ENCODE measurements at regions of chrX and their contacts with region 1.

Region 1: DNA sequence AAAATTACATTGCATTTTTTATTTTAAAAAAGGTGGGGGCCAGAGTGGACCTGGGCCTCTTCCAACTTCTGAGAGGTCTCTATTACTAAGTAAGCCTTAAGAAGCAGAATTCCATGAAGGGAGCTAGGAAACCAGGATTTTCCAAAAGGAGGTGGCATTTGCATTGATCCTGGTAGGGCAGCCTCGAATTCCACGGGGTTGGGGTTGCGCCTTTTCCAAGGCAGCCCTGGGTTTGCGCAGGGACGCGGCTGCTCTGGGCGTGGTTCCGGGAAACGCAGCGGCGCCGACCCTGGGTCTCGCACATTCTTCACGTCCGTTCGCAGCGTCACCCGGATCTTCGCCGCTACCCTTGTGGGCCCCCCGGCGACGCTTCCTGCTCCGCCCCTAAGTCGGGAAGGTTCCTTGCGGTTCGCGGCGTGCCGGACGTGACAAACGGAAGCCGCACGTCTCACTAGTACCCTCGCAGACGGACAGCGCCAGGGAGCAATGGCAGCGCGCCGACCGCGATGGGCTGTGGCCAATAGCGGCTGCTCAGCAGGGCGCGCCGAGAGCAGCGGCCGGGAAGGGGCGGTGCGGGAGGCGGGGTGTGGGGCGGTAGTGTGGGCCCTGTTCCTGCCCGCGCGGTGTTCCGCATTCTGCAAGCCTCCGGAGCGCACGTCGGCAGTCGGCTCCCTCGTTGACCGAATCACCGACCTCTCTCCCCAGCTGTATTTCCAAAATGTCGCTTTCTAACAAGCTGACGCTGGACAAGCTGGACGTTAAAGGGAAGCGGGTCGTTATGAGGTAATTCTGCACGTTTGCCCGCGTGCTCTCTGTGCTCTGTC is at the start of gene PGK1:
- DNase-seq: peak; percentile 95
- H3K4me3 Mint-ChIP-seq: peak within 1 kb of the TSS; percentile 95
- H3K27ac Mint-ChIP-seq: peak within 1 kb of the TSS; percentile 92
- H3K4me1 Mint-ChIP-seq: peaks cover 28% of the 10 kb centered on the region
- H3K27me3 Mint-ChIP-seq: no peaks in the 10 kb centered on the region
- total RNA-seq, gene PGK1: 744 to 766 TPM

Region 2: DNA sequence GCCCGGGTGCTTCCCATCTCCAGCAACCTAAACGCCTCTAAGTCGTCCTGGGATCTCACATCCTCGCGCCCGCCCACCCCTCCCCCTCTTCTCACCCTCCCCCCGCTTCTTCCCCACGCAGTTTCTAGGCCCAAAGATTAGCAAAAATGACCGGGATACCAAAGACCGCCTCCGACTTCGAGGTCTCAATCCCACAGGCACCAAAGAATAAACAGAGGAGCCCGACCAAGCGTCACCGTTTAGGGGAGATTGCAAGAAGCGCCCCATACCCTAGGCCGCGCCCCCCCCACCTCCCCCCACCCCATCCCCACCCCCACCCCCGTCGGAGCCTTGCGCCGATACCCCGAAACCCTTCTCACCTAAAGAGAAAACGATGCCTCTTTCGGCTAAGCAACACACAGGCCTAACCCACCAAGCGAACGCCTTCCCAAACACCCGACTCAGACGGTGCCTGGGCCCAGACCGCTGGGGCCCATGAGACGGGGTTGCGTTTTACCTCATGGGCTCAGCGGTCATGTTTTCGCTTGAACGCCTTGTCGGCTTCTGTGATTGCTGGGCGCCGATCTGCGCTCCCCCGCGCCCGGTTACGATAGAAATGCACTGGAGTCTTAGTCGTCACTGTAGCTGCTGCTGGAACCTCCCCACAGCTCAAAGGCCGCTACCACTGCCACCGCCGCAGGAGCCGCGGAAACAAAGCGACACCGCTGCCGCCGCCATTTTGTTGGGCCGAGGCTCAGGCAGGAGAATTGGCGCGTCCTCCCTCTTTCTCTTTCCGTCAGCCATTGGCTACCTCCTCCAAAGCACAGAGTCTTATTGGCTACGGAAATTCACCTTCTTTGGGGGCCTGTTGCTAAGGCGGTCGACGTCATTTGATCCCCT is 318.1 kb before region 1 on chrX and contains the start of gene ATRX:
- CTCF ChIA-PET with region 1: no interaction called
- intact Hi-C with region 1: loop called (anchors 2 kb)
- DNase-seq: peak; percentile 80
- H3K4me3 Mint-ChIP-seq: peak within 1 kb of the TSS; percentile 99
- H3K27ac Mint-ChIP-seq: peak within 1 kb of the TSS; percentile 100
- H3K4me1 Mint-ChIP-seq: peaks cover 17% of the 10 kb centered on the region
- H3K27me3 Mint-ChIP-seq: no peaks in the 10 kb centered on the region
- total RNA-seq, gene ATRX: 49.2 to 49.9 TPM

Region 3: DNA sequence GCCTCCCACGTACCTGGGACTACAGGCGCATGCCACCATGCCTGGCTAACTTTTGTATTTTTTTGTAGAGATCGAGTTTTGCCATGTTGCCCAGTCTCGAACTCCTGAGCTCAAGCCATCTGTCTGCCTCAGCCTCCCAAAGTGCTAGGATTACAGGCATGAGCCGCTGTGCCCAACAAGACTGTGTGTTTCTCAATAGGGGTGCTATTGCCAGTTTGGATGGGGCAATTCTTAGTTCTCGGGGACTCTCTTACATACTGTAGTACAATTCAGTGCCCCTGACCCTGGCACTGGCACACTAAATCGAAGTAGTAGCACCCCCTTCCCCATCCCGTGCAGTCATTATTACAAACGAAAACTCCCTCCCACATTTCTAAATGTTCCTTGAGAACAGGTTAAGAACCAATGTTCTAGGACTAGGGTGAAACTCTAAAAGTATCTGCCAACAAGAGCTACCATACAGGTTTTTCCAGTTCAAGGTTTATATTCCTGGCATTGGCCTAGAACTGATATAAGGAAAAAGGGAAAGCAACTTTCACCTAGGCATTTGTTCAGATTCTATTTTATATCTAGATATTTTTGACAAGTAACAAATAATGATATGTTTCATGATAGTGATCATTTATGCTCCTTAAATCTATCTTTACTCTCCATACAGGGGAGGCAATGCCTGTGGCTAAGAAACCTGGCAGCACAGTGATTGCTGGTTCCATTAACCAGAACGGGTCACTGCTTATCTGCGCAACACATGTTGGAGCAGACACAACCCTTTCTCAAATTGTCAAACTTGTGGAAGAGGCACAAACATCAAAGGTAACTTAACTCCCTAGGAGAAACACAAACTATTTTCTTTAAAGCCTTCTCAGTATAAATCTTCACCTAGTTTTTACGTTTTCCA is 84.0 kb before region 1 on chrX:
- CTCF ChIA-PET with region 1: no interaction called
- intact Hi-C with region 1: no loop called
- DNase-seq: no peak
- H3K4me3 Mint-ChIP-seq: no peak overlapping the region
- H3K27ac Mint-ChIP-seq: no peak overlapping the region
- H3K4me1 Mint-ChIP-seq: peaks cover 9% of the 10 kb centered on the region
- H3K27me3 Mint-ChIP-seq: no peaks in the 10 kb centered on the region

Region 4: DNA sequence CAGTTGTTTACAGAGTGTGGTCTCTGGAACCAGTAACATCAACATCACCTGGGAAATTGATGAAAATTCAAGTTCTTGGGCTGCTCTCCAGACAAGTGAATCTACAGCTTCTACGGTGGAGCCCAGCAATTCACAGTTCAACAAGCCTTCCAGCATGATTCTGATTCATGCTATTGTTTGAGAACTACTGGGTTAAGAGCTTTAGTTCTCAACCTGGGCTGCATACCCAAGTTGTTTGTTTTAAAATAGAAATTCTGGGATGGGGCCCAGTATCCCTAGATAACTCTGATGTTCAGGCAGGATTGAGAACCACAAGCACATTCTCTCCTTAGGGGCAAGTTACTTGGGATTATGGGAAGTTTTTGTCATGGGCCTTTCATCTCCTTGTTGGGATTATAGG is 37.7 kb before region 1 on chrX:
- CTCF ChIA-PET with region 1: no interaction called
- intact Hi-C with region 1: loop called (anchors 1 kb)
- DNase-seq: no peak
- H3K4me3 Mint-ChIP-seq: no peak overlapping the region
- H3K27ac Mint-ChIP-seq: no peak overlapping the region
- H3K4me1 Mint-ChIP-seq: peaks cover 14% of the 10 kb centered on the region
- H3K27me3 Mint-ChIP-seq: no peaks in the 10 kb centered on the region

Region 5: GRCh38 chrX:78321809-78322208 is 218.0 kb after region 1 on chrX:
- CTCF ChIA-PET with region 1: no interaction called
- intact Hi-C with region 1: loop called (anchors 2 kb)
- DNase-seq: peak; percentile 63
- H3K4me3 Mint-ChIP-seq: peak overlapping the region; percentile 32
- H3K27ac Mint-ChIP-seq: peak overlapping the region; percentile 85
- H3K4me1 Mint-ChIP-seq: peaks cover 36% of the 10 kb centered on the region
- H3K27me3 Mint-ChIP-seq: no peaks in the 10 kb centered on the region

Region 6: GRCh38 chrX:79153348-79153747 is 1049.5 kb after region 1 on chrX:
- CTCF ChIA-PET with region 1: no interaction called
- intact Hi-C with region 1: loop called (anchors 10 kb)
- DNase-seq: no peak
- H3K4me3 Mint-ChIP-seq: peak overlapping the region; percentile 72
- H3K27ac Mint-ChIP-seq: peak overlapping the region; percentile 96
- H3K4me1 Mint-ChIP-seq: peaks cover 53% of the 10 kb centered on the region
- H3K27me3 Mint-ChIP-seq: no peaks in the 10 kb centered on the region

Measured in activated naive CD4-positive, alpha-beta T cell treated with anti-CD3 and anti-CD28 coated beads for 36 hours (primary cell).